ENCODE measurements at regions of chr11 and their contacts with region 1.

Region 1: GRCh38 chr11:35822815-35823495 is 120.9 kb upstream of the LDLRAD3 start:
- DNase-seq: no peak
- H3K4me3 ChIP-seq: no peak overlapping the region
- H3K27ac ChIP-seq: no peak overlapping the region
- H3K27me3 ChIP-seq: no peaks in the 10 kb centered on the region
- CTCF ChIP-seq: no peak

Region 2: GRCh38 chr11:35539781-35540281 is 283.1 kb before region 1 on chr11:
- CTCF ChIA-PET with region 1: no interaction called
- POLR2A ChIA-PET with region 1: no interaction called
- DNase-seq: no peak
- H3K4me3 ChIP-seq: no peak overlapping the region
- H3K27ac ChIP-seq: peak overlapping the region; percentile 77
- H3K27me3 ChIP-seq: no peaks in the 10 kb centered on the region
- CTCF ChIP-seq: no peak

Region 3: DNA sequence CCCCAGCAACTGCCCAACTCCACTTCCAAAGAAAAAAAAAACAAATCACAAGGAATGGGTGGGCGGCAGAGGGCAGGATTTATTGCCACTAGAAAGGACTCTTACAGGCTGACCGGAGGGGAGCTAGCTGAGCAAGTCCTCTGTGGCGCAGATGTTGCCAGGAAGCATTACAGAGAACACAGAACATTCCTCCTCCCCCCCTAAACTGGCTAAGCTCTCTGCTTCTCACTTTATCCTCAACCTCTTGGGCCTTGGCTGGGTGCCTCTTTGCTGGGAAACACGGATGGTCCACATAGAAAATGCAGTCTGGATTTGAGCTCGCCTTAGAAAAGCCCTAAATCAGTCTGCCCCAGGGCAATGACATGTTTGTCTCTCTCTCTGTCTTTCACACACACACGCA is 217.2 kb before region 1 on chr11:
- CTCF ChIA-PET with region 1: interaction called, 15 read pairs
- POLR2A ChIA-PET with region 1: no interaction called
- DNase-seq: no peak
- H3K4me3 ChIP-seq: no peak overlapping the region
- H3K27ac ChIP-seq: no peak overlapping the region
- H3K27me3 ChIP-seq: peaks cover 10% of the 10 kb centered on the region
- CTCF ChIP-seq: no peak

Region 4: GRCh38 chr11:35765211-35765610 is 57.7 kb before region 1 on chr11:
- CTCF ChIA-PET with region 1: interaction called, 13 read pairs
- POLR2A ChIA-PET with region 1: no interaction called
- DNase-seq: no peak
- H3K4me3 ChIP-seq: no peak overlapping the region
- H3K27ac ChIP-seq: no peak overlapping the region
- H3K27me3 ChIP-seq: no peaks in the 10 kb centered on the region
- CTCF ChIP-seq: no peak

Region 5: DNA sequence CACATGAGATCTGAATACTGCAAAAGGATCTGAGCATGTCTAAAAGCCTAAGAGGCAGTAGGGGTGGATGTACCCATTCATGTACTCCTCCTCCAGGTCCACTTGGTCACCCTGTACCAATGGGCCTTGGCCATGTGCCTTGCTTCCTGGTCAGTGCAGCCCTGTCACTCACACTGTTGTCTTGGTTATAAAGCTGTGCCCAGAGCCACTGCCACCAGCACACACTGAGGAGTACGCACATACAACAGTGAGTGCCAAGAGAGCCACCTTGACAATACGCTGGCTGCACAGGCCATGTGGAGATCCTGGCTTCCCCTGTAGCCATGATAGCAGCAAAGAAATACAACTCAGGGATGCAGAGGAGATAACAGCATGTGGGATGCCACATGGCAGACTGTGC is 24.5 kb after region 1 on chr11:
- CTCF ChIA-PET with region 1: interaction called, 30 read pairs
- POLR2A ChIA-PET with region 1: no interaction called
- DNase-seq: no peak
- H3K4me3 ChIP-seq: no peak overlapping the region
- H3K27ac ChIP-seq: no peak overlapping the region
- H3K27me3 ChIP-seq: peaks cover 19% of the 10 kb centered on the region
- CTCF ChIP-seq: no peak

Region 6: DNA sequence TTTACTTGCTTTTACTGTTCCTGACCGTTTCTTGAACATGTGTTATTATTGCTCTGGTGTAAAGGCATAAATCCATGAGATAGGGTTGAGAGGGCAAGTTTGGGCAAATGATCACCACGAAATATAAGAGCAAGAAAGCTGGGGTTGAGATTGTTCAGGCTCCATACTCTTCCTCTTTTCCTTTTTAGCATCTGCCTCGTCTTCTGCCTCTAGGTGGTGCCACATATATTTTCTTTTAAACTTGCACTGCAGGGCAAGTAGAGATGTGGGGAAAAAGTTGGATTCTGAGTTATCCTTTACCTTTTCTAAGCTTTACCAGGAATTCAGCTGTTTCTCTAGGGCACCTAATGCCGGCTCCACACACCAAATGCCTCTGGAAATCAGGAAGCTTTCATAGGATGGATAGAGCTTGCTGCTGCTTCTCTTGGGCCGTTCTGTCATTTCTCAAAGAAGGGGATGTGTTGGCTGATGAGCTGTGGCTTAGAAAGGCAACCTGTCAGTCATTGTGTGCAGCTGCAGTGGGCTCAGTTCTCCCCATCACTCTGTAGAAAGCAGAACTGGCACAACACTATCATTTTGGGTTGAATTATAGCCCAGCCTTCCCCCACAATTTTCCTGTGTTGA is 219.1 kb after region 1 on chr11:
- CTCF ChIA-PET with region 1: interaction called, 28 read pairs
- POLR2A ChIA-PET with region 1: no interaction called
- DNase-seq: no peak
- H3K4me3 ChIP-seq: no peak overlapping the region
- H3K27ac ChIP-seq: no peak overlapping the region
- H3K27me3 ChIP-seq: no peaks in the 10 kb centered on the region
- CTCF ChIP-seq: peak; percentile 66; the same call in 1 of the 2 replicates

Region 7: DNA sequence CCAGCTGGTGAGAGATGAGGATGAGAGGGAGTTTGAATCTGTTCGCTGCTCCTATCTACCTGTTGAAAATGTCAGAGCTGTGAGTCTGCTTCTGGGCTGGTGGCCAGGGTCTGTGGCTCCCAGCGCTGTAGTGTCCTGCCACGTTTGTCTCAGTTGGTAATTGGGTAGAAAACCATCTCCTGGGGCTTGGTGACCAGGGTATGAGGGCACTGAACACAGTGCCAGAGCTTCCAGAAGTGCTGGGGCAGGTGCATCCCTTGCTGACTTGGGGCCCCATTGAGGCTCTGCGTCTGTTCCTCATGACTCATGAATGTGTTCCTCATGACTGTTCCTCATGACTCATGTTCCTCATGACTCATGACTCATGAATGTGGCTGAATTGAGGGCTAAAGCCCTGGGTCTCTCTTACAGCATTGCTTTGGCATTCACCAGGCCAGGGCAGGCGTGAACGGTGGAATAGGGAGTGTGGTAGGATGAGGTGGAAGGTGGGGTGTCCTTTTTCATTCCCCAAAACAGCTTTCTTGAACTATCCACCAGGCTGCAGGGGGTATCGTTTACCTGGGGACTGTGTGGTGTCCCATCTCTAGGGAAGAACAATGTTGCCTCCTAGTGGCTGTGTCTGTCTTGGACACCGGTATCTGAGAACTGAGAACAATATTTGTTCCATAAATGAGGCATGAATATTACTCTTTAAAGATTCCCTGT is 326.7 kb after region 1 on chr11:
- CTCF ChIA-PET with region 1: interaction called, 33 read pairs
- POLR2A ChIA-PET with region 1: no interaction called
- DNase-seq: peak; percentile 97
- H3K4me3 ChIP-seq: no peak overlapping the region
- H3K27ac ChIP-seq: peak overlapping the region; percentile 95
- H3K27me3 ChIP-seq: no peaks in the 10 kb centered on the region
- CTCF ChIP-seq: peak; percentile 67

Region 8: GRCh38 chr11:36280531-36280930 is 457.6 kb after region 1 on chr11:
- CTCF ChIA-PET with region 1: interaction called, 11 read pairs
- POLR2A ChIA-PET with region 1: no interaction called
- DNase-seq: no peak
- H3K4me3 ChIP-seq: no peak overlapping the region
- H3K27ac ChIP-seq: no peak overlapping the region
- H3K27me3 ChIP-seq: no peaks in the 10 kb centered on the region
- CTCF ChIP-seq: no peak

Measured in AG04450 (cell line).